ENCODE measurements at regions of chr7 and their contacts with region 1.

Region 1: GRCh38 chr7:106461993-106462859 is 177.4 kb upstream of the NAMPT start:
- DNase-seq: no peak
- ATAC-seq: peak; percentile 46
- H3K4me3 ChIP-seq: no peak overlapping the region
- H3K27ac ChIP-seq: no peak overlapping the region
- H3K4me1 ChIP-seq: peaks cover 0 to 10% of the 10 kb centered on the region in 2 donors
- H3K27me3 ChIP-seq: no peaks in the 10 kb centered on the region

Region 2: GRCh38 chr7:106176414-106177299 is 285.6 kb before region 1 on chr7:
- intact Hi-C with region 1: loop called (anchors 1 to 5 kb)
- DNase-seq: peak; percentile 87 to 95
- ATAC-seq: peak; percentile 93
- H3K4me3 ChIP-seq: no peak overlapping the region
- H3K27ac ChIP-seq: no peak overlapping the region
- H3K4me1 ChIP-seq: no peaks in the 10 kb centered on the region
- H3K27me3 ChIP-seq: no peaks in the 10 kb centered on the region

Region 3: GRCh38 chr7:106273009-106273668 is 189.1 kb before region 1 on chr7:
- intact Hi-C with region 1: loop called in 1 of 2 experiments (anchors 5 kb)
- DNase-seq: no peak
- ATAC-seq: no peak
- H3K4me3 ChIP-seq: no peak overlapping the region
- H3K27ac ChIP-seq: no peak overlapping the region
- H3K4me1 ChIP-seq: no peaks in the 10 kb centered on the region
- H3K27me3 ChIP-seq: no peaks in the 10 kb centered on the region